ENCODE measurements at regions of chr5 and their contacts with region 1.

Region 1: DNA sequence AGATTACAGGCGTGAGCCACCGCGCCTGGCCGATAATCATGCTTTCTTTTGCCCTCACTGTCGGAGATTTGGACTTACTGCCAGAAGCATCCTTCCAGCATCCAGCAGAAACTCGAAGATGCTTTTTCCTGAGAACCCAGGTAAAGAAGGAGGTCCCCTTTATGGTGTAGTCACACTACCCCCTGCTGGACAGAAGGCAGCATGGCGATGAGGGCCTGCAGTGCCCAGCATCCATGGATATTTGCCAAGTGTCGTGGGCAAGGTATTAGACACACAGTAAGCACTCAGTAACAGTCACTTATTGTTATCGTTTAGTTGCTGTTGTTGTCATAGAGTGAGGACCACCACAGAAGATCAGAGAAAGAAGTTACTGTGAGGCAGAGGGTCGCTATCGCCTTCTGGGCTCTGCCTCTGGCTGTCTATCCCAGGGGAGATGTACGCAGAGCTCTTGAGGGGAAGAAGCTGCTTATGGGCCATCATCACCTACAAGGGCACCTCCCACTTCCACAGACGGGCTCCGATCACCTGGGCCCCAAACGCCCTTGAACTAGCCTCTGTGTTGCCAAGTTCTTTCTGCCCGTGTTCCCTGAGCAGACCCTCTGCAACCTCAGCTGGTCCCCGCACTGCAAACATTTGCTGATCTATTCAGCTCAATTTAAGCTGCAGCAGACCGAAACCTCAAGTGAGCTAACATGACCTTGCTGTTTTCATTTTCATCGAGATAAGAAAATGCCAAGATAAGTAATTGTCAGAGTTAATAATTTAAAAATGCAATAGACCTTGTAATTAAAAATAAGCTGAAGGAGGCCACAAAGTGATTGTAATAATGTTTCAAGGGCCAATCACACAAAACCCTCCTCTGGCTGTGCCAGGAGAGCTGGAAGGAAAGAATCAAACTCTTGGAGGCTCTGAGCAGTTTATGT is 23.9 kb downstream of the C5orf15 start:
- DNase-seq: peak; percentile 75
- H3K4me3 Mint-ChIP-seq: no peak overlapping the region
- H3K27ac Mint-ChIP-seq: no peak overlapping the region
- H3K4me1 Mint-ChIP-seq: peaks cover 9% of the 10 kb centered on the region
- H3K27me3 Mint-ChIP-seq: no peaks in the 10 kb centered on the region

Region 2: GRCh38 chr5:133423618-133424282 is 520.8 kb before region 1 on chr5:
- CTCF ChIA-PET with region 1: interaction called, 5 read pairs
- intact Hi-C with region 1: loop called (anchors 5 kb)
- DNase-seq: peak; percentile 79
- H3K4me3 Mint-ChIP-seq: no peak overlapping the region
- H3K27ac Mint-ChIP-seq: no peak overlapping the region
- H3K4me1 Mint-ChIP-seq: peaks cover 10% of the 10 kb centered on the region
- H3K27me3 Mint-ChIP-seq: no peaks in the 10 kb centered on the region

Region 3: GRCh38 chr5:133489632-133490031 is 454.9 kb before region 1 on chr5:
- CTCF ChIA-PET with region 1: interaction called, 3 read pairs
- intact Hi-C with region 1: loop called (anchors 1 kb)
- DNase-seq: peak; percentile 74
- H3K4me3 Mint-ChIP-seq: no peak overlapping the region
- H3K27ac Mint-ChIP-seq: no peak overlapping the region
- H3K4me1 Mint-ChIP-seq: peaks cover 9% of the 10 kb centered on the region
- H3K27me3 Mint-ChIP-seq: no peaks in the 10 kb centered on the region

Region 4: DNA sequence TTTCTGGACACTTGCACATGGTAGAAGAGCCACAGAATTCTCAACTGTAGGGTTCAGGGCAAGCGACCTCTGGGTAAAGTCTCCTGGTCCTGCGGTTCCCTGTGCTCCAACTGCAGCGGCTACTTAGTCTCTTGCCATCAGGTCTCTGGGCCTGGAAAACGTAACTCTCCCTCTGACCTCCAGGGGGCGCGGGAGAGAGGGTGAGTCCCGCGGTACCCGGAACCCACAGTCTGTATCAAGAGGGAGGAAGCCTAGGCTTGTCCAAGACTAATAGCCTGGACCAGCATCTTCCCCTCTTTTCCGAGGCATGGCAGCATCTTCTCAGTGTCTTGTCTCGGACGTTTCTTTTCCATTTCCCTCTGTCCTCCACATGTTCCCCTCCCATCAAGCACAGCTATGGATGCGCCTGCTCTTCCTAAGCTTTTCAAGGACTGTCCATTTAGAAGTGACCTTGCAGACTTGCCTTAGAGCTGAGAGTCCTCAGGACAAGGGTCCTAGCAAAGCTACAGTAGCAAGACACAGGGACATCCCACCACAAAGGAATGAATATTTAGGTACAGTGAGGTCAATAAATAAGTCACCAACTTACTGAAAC is 391.5 kb before region 1 on chr5:
- CTCF ChIA-PET with region 1: interaction called, 7 read pairs
- intact Hi-C with region 1: loop called (anchors 1 kb)
- DNase-seq: peak; percentile 79
- H3K4me3 Mint-ChIP-seq: no peak overlapping the region
- H3K27ac Mint-ChIP-seq: no peak overlapping the region
- H3K4me1 Mint-ChIP-seq: no peaks in the 10 kb centered on the region
- H3K27me3 Mint-ChIP-seq: peaks cover 18% of the 10 kb centered on the region

Region 5: DNA sequence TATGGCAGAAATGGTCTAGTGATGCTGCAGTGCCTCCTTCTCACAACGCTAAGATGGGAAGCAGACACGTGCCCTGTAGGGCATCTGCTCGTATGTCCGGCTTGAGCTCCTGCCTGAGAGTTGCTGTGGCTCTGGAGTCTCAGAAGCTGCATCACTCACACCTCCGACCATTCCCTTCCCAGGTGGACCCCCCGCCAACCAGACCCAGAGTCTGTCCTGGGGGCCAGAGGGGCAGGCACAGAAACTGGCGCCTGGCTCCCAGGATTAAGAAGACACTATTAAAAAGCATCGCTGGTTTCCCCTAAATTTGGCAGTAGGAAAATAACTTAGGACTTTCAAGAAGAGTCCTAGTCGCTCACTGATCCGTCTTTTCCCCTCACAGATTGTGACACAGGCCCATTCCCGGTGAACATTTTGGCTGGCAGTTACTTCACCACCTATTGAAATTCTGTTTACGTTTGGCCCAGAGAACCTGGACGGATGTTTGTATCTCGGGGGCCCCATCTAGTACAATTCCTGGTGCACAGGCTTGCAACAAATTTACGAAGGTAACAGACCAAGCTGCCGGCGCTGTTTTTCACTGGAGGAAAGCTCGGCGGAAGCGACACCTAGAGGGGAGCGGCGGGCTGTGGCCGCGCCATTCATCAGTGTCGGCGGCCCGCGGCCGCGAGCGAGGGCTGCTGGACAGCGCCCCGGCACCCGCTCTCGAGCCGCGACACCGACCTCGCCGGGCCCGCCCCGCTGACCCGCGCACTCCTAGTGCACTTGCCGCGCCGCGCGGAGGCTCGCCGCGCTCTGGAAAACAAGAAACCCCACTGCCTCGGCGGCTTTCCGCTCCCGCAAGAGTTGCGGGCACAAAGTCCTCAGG is 333.8 kb before region 1 on chr5:
- CTCF ChIA-PET with region 1: interaction called, 3 read pairs
- intact Hi-C with region 1: loop called (anchors 10 kb)
- DNase-seq: peak; percentile 69
- H3K4me3 Mint-ChIP-seq: peak overlapping the region; percentile 51
- H3K27ac Mint-ChIP-seq: no peak overlapping the region
- H3K4me1 Mint-ChIP-seq: peaks cover 12% of the 10 kb centered on the region
- H3K27me3 Mint-ChIP-seq: peaks cover 52% of the 10 kb centered on the region

Region 6: DNA sequence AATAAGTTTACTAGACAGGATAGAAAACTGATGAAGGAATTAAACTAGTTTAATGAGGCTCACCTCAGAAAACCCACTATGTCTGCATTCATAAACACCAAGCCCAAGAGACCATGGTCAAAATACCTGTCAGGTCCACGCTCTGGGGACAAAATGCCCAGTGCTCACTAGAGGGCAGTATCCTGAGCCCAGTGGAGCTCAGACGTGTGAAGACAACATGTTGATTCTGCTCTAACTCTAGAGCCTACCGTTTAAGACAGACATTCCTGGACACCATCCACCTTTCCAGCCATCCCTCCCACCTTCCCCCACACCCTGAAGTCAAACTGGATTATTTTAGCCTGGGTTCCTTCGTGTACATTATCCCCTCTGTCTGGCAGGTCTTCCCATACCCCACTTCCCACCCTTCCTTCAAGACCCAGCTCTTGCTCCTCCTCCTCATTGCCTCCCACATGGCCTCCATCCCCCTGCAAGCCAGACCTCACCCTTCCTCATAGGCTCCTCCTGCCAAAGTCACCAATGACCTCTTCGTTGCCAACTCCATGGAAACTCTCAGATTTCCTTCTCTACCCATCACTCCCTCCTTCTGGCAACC is 189.9 kb before region 1 on chr5:
- CTCF ChIA-PET with region 1: interaction called, 3 read pairs
- intact Hi-C with region 1: loop called (anchors 1 kb)
- DNase-seq: peak; percentile 66
- H3K4me3 Mint-ChIP-seq: no peak overlapping the region
- H3K27ac Mint-ChIP-seq: no peak overlapping the region
- H3K4me1 Mint-ChIP-seq: no peaks in the 10 kb centered on the region
- H3K27me3 Mint-ChIP-seq: peaks cover 18% of the 10 kb centered on the region

Region 7: GRCh38 chr5:133907075-133907474 is 37.4 kb before region 1 on chr5:
- CTCF ChIA-PET with region 1: interaction called, 5 read pairs
- intact Hi-C with region 1: loop called (anchors 1 kb)
- DNase-seq: no peak
- H3K4me3 Mint-ChIP-seq: no peak overlapping the region
- H3K27ac Mint-ChIP-seq: no peak overlapping the region
- H3K4me1 Mint-ChIP-seq: no peaks in the 10 kb centered on the region
- H3K27me3 Mint-ChIP-seq: no peaks in the 10 kb centered on the region